Adrenal gland (tissue), 19 donors: ENCODE measurements at regions of chr3 and their contacts with region 1.

Region 1: DNA sequence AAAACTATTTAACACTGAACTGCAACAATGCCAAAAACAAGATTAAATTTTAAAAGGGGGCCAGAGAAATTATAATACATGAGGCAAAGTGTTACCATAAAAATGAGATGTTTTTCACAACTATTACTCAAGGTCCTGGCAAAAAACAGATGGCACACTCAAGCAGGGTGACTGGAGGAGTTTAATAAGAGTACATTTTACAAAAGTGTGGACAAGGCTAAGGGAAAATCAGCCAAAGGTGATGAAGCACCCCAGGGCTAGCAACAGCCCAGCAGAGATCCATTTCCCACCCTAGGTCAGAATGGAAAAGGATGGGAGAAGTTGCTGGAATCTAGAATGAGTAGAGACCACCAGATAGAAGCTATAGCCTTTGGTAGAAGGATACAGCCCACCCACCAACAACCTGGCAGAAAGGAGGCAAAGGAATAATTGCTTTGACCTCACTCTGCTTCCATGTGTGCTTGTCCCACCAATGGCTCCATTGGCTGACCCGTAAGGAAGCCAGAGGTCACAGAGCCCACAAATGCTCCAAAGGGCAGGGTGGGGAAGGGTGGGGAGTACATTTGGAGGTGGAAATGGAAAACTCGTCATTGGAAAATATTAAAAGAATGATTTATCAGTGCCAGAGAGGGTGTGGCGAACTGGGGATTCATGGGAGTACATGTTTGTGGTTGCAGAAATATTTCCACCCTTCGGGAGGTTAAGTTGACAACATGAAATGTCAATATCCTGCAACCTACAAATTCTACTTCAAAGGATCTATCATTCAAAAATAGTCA is 161.0 kb upstream of the UBE2E2 start:
- DNase-seq: no peak
- H3K4me3 ChIP-seq: no peak overlapping the region
- H3K27ac ChIP-seq: peak overlapping the region in 1 of 5 donors; percentile 65
- H3K4me1 ChIP-seq: no peaks in the 10 kb centered on the region
- H3K27me3 ChIP-seq: no peaks in the 10 kb centered on the region
- CTCF ChIP-seq: no peak
- POLR2A ChIP-seq: no peak

Region 2: GRCh38 chr3:22835041-22835440 is 207.1 kb before region 1 on chr3:
- intact Hi-C with region 1: no loop called
- DNase-seq: no peak
- H3K4me3 ChIP-seq: no peak overlapping the region
- H3K27ac ChIP-seq: no peak overlapping the region
- H3K4me1 ChIP-seq: no peaks in the 10 kb centered on the region
- H3K27me3 ChIP-seq: no peaks in the 10 kb centered on the region
- CTCF ChIP-seq: no peak
- POLR2A ChIP-seq: no peak

Region 3: GRCh38 chr3:22951910-22952309 is 90.2 kb before region 1 on chr3:
- intact Hi-C with region 1: no loop called
- DNase-seq: no peak
- H3K4me3 ChIP-seq: no peak overlapping the region
- H3K27ac ChIP-seq: no peak overlapping the region
- H3K4me1 ChIP-seq: no peaks in the 10 kb centered on the region
- H3K27me3 ChIP-seq: no peaks in the 10 kb centered on the region
- CTCF ChIP-seq: no peak
- POLR2A ChIP-seq: no peak

Region 4: DNA sequence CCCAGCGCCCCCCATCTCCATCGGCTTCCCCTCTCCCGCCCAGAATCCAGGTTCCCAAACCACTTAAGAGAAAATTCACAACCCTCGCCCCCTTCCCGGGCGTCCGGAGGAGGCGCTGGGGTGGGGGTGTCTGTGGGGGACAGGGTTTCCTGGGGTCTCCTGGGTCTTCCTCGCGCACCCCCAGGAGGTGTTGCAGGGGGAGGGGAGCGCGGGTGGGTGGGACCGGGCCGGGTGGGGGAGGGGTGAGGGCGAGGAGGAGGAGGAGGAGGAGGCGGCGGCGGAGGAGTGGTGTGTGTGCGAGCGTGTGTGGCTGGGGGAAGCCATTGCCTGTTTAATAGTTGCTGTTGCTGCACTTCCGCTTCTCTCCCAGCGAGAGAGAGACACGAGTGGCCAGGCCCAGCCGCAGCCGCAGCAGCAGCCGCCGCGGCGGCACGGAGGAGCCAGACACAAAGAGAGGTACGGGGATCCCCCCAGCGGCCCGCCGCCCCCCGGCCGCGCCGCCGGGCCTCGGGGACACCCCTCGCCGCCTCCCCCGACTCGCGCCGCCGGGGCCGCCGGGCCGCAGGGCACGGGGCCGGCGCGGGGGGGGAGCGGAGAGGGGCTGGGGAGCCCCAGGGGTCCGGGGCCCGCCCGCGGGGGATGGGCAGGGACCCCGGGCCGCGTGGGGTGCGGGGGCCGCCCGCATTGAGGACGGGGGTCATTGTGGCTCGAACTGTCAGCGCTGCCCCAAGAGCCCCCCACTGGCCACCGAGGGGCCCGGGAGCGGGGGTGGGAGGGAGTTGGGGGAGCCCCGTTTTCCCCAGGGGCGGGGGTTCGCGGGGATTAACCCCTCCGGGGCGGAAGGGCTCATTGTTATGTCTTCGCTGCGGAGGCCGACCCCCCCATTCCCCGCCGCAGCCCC is 763.8 kb after region 1 on chr3 and contains the start of gene UBE2E1:
- intact Hi-C with region 1: loop called in 1 of 2 experiments (anchors 5 kb)
- DNase-seq: peak; percentile 66 to 81 (median 74)
- H3K4me3 ChIP-seq: peak within 1 kb of the TSS; percentile 45 to 99 (median 88)
- H3K27ac ChIP-seq: peak within 1 kb of the TSS; percentile 39 to 90 (median 76)
- H3K4me1 ChIP-seq: peaks cover 10 to 31% of the 10 kb centered on the region in 2 donors
- H3K27me3 ChIP-seq: no peaks in the 10 kb centered on the region
- CTCF ChIP-seq: no peak
- POLR2A ChIP-seq: peak in 1 of 2 donors; percentile 34
- total RNA-seq, gene UBE2E1: 19.4 to 80.5 (median 60.6) TPM